Activated B cell treated with CpG ODN at 0.5 μM for 24 hours (primary cell): ENCODE measurements at regions of chr2 and their contacts with region 1.

Region 1: DNA sequence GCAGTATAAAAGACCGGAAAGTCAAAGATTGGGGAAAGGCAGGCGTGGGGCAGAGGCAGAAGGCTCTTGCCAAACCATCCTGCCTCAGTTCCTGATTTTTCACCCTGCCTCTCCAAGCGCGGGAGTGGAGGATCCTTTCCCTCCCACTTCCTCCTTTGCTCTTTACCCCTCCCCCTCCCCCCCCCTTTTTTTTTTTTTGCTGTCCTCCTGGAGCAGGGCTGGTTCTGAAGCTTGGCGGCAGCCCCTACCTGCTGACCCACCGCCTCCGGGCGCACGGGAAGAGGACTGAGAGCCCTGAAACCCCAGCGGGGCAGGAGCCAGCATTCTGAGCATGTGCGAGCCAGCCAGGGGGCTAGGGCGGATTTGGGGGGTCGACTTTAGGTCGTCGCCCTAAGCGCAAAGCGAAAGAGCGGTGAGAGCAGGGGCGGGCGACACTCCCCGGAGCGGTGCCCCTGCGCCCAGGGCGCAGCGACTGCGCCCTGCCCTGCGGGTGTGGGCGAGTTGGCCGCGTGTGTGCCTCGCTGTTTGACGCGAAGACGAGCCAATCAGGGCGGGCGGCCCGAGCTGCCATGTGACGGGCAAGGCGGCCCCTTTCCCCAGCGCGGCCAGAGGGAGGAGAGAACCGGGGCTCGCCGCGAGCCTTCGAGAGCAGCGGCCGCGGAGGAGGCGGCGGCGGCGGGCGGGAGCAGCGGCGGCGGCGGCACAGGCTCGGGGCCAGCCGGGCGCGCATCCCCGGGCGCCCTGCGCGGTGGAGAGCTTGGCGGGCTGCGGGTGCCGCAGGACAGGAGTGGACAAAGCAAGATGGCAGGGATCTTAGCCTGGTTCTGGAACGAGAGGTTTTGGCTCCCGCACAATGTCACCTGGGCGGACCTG is at the start of gene CERS6:
- DNase-seq: peak; percentile 78
- ATAC-seq: peak; percentile 94
- H3K4me3 Mint-ChIP-seq: no peak within 1 kb of the TSS
- H3K27ac Mint-ChIP-seq: peak within 1 kb of the TSS; percentile 74
- H3K4me1 Mint-ChIP-seq: peaks cover 20% of the 10 kb centered on the region
- H3K27me3 Mint-ChIP-seq: no peaks in the 10 kb centered on the region
- CTCF ChIP-seq: no peak
- total RNA-seq, gene CERS6: 5.3 and 6.1 TPM in 2 replicates

Region 2: GRCh38 chr2:168246483-168247340 is 209.2 kb before region 1 on chr2:
- CTCF ChIA-PET with region 1: no interaction called
- POLR2A ChIA-PET with region 1: no interaction called
- intact Hi-C with region 1: loop called (anchors 2 kb)
- DNase-seq: peak; percentile 64
- ATAC-seq: peak; percentile 47
- H3K4me3 Mint-ChIP-seq: peak overlapping the region; percentile 87
- H3K27ac Mint-ChIP-seq: peak overlapping the region; percentile 80
- H3K4me1 Mint-ChIP-seq: peaks cover 31% of the 10 kb centered on the region
- H3K27me3 Mint-ChIP-seq: no peaks in the 10 kb centered on the region
- CTCF ChIP-seq: no peak

Region 3: DNA sequence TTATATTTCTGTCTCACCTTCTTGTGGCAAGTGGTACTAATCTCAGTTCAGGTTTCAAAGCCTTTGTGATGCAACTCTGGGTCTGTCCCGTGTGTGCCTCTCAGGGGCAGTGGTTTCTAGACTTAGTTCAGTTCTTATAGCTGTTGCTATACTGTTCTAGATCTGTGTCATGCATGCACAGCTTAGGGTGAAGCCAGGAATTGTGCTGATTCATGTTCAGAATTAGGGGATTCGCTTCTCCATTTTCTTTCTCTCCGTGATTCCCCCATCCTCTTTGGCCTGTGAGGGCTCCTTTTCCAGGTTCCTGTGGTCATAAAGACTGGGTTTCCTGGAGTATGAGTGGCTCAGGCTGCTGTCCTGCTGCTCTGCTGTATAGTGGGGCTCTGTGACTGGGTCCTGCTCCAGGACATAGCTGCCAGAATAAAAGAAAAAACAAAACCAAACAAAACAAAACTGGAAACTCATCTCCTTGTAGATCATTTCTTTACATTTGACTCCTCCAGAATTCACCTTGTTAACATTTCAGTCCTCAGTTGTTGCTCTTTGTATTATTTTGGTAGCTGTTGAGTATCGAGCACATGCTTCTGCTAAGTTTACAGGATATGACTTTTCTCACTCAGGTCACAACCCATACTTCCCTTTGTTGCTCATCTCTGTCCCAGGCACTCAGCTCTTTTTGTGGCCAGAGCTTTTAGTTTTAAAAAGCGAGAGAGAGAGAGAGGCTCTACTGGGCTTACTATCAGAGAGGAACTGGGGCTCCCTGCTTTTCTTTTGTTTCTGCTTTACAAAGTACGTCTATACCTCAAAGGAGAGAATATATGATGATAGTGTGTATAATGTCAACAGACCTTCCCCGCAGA is 34.4 kb after region 1 on chr2:
- CTCF ChIA-PET with region 1: no interaction called
- POLR2A ChIA-PET with region 1: interaction called, 8 read pairs
- intact Hi-C with region 1: loop called (anchors 1 kb)
- DNase-seq: no peak
- ATAC-seq: peak; percentile 86
- H3K4me3 Mint-ChIP-seq: peak overlapping the region; percentile 66
- H3K27ac Mint-ChIP-seq: peak overlapping the region; percentile 88
- H3K4me1 Mint-ChIP-seq: peaks cover 35% of the 10 kb centered on the region
- H3K27me3 Mint-ChIP-seq: no peaks in the 10 kb centered on the region
- CTCF ChIP-seq: no peak

Region 4: GRCh38 chr2:168601741-168602140 is 145.9 kb after region 1 on chr2:
- CTCF ChIA-PET with region 1: no interaction called
- POLR2A ChIA-PET with region 1: no interaction called
- intact Hi-C with region 1: loop called (anchors 5 kb)
- DNase-seq: no peak
- ATAC-seq: peak; percentile 74
- H3K4me3 Mint-ChIP-seq: peak overlapping the region; percentile 39
- H3K27ac Mint-ChIP-seq: peak overlapping the region; percentile 75
- H3K4me1 Mint-ChIP-seq: peaks cover 61% of the 10 kb centered on the region
- H3K27me3 Mint-ChIP-seq: no peaks in the 10 kb centered on the region
- CTCF ChIP-seq: no peak

Region 5: DNA sequence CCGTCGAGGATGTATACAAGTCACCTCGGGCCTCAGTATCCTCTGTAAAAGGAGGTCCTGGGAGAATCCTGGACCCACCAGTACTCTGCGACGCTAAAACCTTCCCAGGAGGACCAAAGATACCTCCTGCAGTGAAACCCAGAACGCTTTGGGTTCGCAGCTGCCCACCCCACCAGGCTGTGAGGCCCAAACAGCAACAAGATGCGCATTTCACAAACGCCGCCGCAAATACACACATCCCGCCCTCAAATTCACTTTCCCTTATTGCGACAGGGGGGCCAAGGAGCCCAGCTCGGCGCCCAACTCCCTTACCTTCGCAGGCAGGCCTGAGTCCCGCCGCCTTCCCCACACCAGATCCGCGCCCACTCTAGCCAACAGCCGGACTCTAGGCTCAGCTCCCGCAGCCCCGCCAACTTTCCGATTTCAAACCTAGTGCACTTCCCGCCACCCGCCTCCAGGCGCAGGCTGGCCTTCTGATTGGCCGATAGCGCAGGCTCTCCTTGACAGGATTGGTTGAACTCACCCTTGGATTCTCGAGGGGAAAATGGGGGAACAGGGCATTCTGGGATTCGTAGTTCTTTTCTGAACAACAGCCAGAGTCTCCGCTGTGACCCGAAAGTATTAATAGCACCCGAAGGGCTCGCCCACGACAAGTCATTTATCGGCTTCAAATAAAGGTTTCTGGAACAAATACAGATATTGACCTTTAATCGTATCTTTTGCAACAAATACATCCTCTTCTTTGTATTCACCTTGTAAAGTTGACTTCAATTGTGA is 434.3 kb after region 1 on chr2 and contains the start of gene SPC25:
- CTCF ChIA-PET with region 1: no interaction called
- POLR2A ChIA-PET with region 1: no interaction called
- intact Hi-C with region 1: loop called (anchors 5 kb)
- DNase-seq: peak; percentile 73
- ATAC-seq: peak; percentile 100
- H3K4me3 Mint-ChIP-seq: peak within 1 kb of the TSS; percentile 91
- H3K27ac Mint-ChIP-seq: no peak within 1 kb of the TSS
- H3K4me1 Mint-ChIP-seq: peaks cover 11% of the 10 kb centered on the region
- H3K27me3 Mint-ChIP-seq: peaks cover 5% of the 10 kb centered on the region
- CTCF ChIP-seq: no peak
- total RNA-seq, gene SPC25: 0.18 and 0.95 TPM in 2 replicates